H1 (cell line): ENCODE measurements at regions of chr1 and their contacts with region 1.

Region 1: DNA sequence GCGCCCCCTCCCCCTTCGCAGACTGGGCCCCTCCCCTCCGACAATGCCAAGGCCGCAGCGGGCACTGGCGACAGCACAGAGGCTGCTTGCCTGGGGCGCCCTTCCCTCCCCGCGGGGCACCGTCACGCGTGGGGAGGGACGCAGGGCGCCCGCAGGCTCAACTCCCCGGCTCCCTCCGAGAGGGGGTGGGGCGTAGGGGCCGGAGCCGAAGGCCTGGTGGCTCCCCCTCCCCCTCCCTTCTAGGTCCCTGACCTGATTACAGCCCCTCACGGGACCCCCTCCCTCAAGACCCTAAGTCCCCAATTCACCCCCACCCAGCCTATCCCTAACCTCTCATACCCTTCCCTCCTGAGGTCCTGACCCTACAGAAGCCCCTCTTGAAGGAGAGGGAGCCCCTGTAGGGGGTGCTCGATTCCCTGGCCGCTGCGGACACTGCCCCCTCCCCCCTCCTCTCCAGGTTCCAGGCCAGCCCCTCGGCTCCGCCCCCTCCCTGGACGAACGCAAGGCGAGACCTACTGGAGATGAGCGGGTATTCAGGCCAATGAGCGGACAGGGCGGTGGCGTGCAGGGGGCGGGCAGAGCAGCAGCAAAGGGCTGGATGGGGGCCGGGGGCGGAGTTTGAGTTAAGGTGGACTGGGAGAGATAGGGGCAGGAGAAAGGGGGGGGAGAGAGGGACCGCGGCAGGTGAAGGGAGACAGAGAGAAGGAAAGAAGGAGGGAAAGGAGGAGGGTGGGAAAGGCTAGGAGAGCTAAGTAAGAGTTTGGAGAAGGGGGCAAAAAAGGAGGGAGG is 733 bp upstream of the ZBTB7B start:
- DNase-seq: peak; percentile 97 to 99
- H3K4me3 ChIP-seq: peak overlapping the region; percentile 62 to 87 (median 70)
- H3K27ac ChIP-seq: no peak overlapping the region; the same call in 1 of the 2 replicates
- H3K4me1 ChIP-seq: peaks cover 6 to 18% (median 14%) of the 10 kb centered on the region in 4 experiments
- H3K27me3 ChIP-seq: no peaks in the 10 kb centered on the region
- CTCF ChIP-seq: peak in 2 of 3 experiments; percentile 20 to 29; a peak in 2 of 4 replicates
- EP300 ChIP-seq: no peak; a peak in 1 of 3 replicates
- POLR2A ChIP-seq: no peak
- RAD21 ChIP-seq: peak; percentile 0 to 42; a peak in 3 of 4 replicates

Region 2: GRCh38 chr1:154819628-154820590 is 182.0 kb before region 1 on chr1:
- CTCF ChIA-PET with region 1: no interaction called
- POLR2A ChIA-PET with region 1: no interaction called
- DNase-seq: peak in 1 of 2 experiments; percentile 65
- H3K4me3 ChIP-seq: no peak overlapping the region
- H3K27ac ChIP-seq: no peak overlapping the region
- H3K4me1 ChIP-seq: peaks cover 0 to 2% (median 1%) of the 10 kb centered on the region in 4 experiments; a peak in 3 of 7 replicates
- H3K27me3 ChIP-seq: no peaks in the 10 kb centered on the region
- CTCF ChIP-seq: peak; percentile 67 to 82 (median 76)
- EP300 ChIP-seq: no peak
- POLR2A ChIP-seq: no peak
- RAD21 ChIP-seq: peak; percentile 59 to 72

Region 3: GRCh38 chr1:154955718-154956543 is 45.9 kb before region 1 on chr1 and contains the start of gene PBXIP1:
- CTCF ChIA-PET with region 1: interaction called, 132 read pairs
- POLR2A ChIA-PET with region 1: interaction called, 662 read pairs
- DNase-seq: peak in 1 of 2 experiments; percentile 90
- H3K4me3 ChIP-seq: peak within 1 kb of the TSS; percentile 60 to 77 (median 66); a peak in 7 of 8 replicates
- H3K27ac ChIP-seq: peak within 1 kb of the TSS; percentile 95
- H3K4me1 ChIP-seq: peaks cover 4 to 28% (median 9%) of the 10 kb centered on the region in 4 experiments
- H3K27me3 ChIP-seq: no peaks in the 10 kb centered on the region; a peak in 2 of 7 replicates
- CTCF ChIP-seq: peak in 1 of 3 experiments; percentile 10; a peak in 1 of 4 replicates
- EP300 ChIP-seq: no peak
- POLR2A ChIP-seq: no peak; a peak in 1 of 3 replicates
- RAD21 ChIP-seq: no peak; a peak in 1 of 4 replicates
- total RNA-seq, gene PBXIP1: 17.9 and 19.8 TPM in 2 replicates

Region 4: GRCh38 chr1:154974063-154974807 is 27.6 kb before region 1 on chr1 and contains the start of gene CKS1B:
- CTCF ChIA-PET with region 1: interaction called, 334 read pairs
- POLR2A ChIA-PET with region 1: interaction called, 702 read pairs
- DNase-seq: peak; percentile 91 to 98
- H3K4me3 ChIP-seq: peak within 1 kb of the TSS; percentile 87 to 99 (median 96)
- H3K27ac ChIP-seq: peak within 1 kb of the TSS; percentile 95
- H3K4me1 ChIP-seq: peaks cover 3 to 13% (median 11%) of the 10 kb centered on the region in 4 experiments; a peak in 6 of 7 replicates
- H3K27me3 ChIP-seq: no peaks in the 10 kb centered on the region
- CTCF ChIP-seq: no peak
- EP300 ChIP-seq: no peak
- POLR2A ChIP-seq: peak; percentile 46 to 82
- RAD21 ChIP-seq: no peak
- total RNA-seq, gene CKS1B: 284 and 294 TPM in 2 replicates

Region 5: GRCh38 chr1:155038602-155039307 is 36.9 kb after region 1 on chr1:
- CTCF ChIA-PET with region 1: interaction called, 354 read pairs
- POLR2A ChIA-PET with region 1: no interaction called
- DNase-seq: no peak
- H3K4me3 ChIP-seq: no peak overlapping the region
- H3K27ac ChIP-seq: no peak overlapping the region
- H3K4me1 ChIP-seq: no peaks in the 10 kb centered on the region
- H3K27me3 ChIP-seq: peaks cover 0 to 2% (median 0%) of the 10 kb centered on the region in 4 experiments; a peak in 3 of 7 replicates
- CTCF ChIP-seq: no peak
- EP300 ChIP-seq: no peak
- POLR2A ChIP-seq: no peak
- RAD21 ChIP-seq: no peak

Region 6: DNA sequence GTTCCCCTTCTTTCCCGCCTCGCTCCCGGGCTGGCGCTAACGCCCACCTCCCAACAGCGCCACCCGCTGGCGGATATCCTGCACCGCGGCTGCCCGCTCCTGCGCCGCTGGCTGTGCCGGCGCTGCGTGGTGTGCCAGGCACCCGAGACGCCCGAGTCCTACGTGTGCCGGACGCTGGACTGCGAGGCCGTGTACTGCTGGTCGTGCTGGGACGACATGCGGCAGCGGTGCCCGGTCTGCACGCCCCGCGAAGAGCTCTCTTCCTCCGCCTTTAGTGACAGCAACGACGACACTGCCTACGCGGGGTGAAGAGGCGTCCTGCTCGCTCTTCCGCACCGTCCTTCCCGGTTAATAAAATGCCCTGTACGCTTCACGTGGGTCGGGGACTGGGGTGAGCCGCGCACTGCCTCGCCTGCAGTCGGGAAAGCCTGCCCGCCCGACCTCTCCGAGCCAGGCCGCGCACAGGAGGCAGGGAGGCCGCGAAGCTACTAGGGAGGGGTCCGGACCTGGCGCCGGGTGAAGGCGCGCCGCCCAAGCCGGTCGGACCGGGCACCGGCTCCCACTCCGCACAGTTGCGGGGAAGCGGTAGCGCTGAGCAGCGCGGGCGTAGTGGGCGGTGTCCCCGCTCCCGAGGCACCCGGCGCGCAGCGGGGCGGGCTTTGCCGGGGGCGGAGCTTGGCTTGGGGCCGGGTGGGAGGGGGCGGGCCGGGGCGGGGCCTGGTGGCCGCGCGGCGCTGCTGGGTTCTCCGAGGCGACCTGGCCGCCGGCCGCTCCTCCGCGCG is 48.9 kb after region 1 on chr1 and contains the start of gene ADAM15:
- CTCF ChIA-PET with region 1: interaction called, 354 read pairs
- POLR2A ChIA-PET with region 1: interaction called, 6 read pairs
- DNase-seq: peak in 1 of 2 experiments; percentile 95
- H3K4me3 ChIP-seq: peak within 1 kb of the TSS; percentile 32 to 76 (median 62)
- H3K27ac ChIP-seq: no peak within 1 kb of the TSS
- H3K4me1 ChIP-seq: peaks cover 4 to 28% (median 10%) of the 10 kb centered on the region in 4 experiments; a peak in 6 of 7 replicates
- H3K27me3 ChIP-seq: peaks cover 0 to 18% (median 12%) of the 10 kb centered on the region in 4 experiments; a peak in 5 of 7 replicates
- CTCF ChIP-seq: peak; percentile 94 to 98 (median 97)
- EP300 ChIP-seq: no peak
- POLR2A ChIP-seq: no peak
- RAD21 ChIP-seq: peak; percentile 51 to 65
- total RNA-seq, gene ADAM15: 32.2 and 32.9 TPM in 2 replicates

Region 7: GRCh38 chr1:155236441-155236840 is 234.6 kb after region 1 on chr1:
- CTCF ChIA-PET with region 1: no interaction called
- POLR2A ChIA-PET with region 1: no interaction called
- DNase-seq: no peak
- H3K4me3 ChIP-seq: no peak overlapping the region
- H3K27ac ChIP-seq: no peak overlapping the region
- H3K4me1 ChIP-seq: no peaks in the 10 kb centered on the region
- H3K27me3 ChIP-seq: 0 out of 7 replicates have a peak, but pooled peaks cover 0 to under 1% (median 0%) of the 10 kb centered on the region in 4 experiments
- CTCF ChIP-seq: no peak
- EP300 ChIP-seq: no peak
- POLR2A ChIP-seq: no peak
- RAD21 ChIP-seq: no peak